Naive thymus-derived CD4-positive, alpha-beta T cell (primary cell): ENCODE measurements at regions of chr16 and their contacts with region 1.

Region 1: DNA sequence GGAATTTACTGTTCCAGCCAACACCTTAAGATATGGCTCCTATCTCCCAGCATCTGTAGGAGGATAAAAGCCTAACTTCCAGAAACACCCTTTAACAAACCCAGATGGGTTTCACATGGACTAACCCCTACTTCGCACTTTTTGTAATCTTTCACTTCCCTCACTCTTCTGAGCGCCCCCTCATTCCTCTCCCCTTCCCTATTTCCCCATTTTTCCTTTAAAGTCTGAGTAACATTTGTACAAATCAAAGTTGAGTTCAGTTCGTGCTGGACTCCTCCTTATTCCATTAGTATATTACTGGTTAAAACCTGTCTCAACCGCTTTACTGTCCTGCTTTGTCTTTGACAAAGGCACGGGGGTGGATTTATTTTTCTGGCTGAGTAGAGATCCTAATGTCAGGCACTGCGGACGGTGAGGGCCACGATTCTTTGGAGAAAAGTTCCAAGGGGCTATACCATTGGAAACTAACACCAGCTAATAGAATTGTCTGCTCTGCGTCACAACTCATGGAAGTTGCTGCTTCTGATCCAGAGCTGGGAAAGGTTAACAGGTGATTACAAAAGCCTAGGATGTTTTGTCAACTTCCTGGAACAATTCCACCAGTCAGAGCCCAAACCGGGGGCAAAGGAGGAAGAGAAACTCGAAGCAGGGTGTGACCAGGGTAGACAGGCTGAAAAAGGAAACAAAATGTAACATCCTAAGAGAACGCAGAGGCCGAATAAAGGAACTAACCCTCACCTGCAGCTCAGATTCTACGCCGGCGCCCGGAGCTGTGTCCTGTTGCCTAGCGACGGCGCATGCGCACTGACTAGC is 12.5 kb downstream of the TAT start:
- DNase-seq: peak in 1 of 9 donors; percentile 3
- ATAC-seq: no peak
- H3K4me3 ChIP-seq: peak overlapping the region; percentile 63
- H3K4me3 Mint-ChIP-seq: peak overlapping the region; percentile 83 to 98 (median 91)
- H3K27ac ChIP-seq: peak overlapping the region; percentile 75
- H3K27ac Mint-ChIP-seq: peak overlapping the region; percentile 92 to 98 (median 94)
- H3K4me1 ChIP-seq: peaks cover 13 to 15% of the 10 kb centered on the region in 2 donors
- H3K4me1 Mint-ChIP-seq: peaks cover 10 to 23% (median 16%) of the 10 kb centered on the region in 7 donors
- H3K27me3 ChIP-seq: no peaks in the 10 kb centered on the region
- H3K27me3 Mint-ChIP-seq: peaks cover 0 to 15% (median 0%) of the 10 kb centered on the region in 5 donors

Region 2: GRCh38 chr16:71288890-71289733 is 275.2 kb before region 1 on chr16 and contains the start of gene CMTR2:
- CTCF ChIA-PET with region 1: no interaction called
- POLR2A ChIA-PET with region 1: no interaction called
- intact Hi-C with region 1: loop called (anchors 1 to 2 kb)
- DNase-seq: peak; percentile 77 to 92 (median 87)
- ATAC-seq: peak; percentile 97
- H3K4me3 ChIP-seq: peak within 1 kb of the TSS; percentile 87
- H3K4me3 Mint-ChIP-seq: peak within 1 kb of the TSS; percentile 81 to 93 (median 89)
- H3K27ac ChIP-seq: peak within 1 kb of the TSS; percentile 82
- H3K27ac Mint-ChIP-seq: peak within 1 kb of the TSS; percentile 75 to 95 (median 92)
- H3K4me1 ChIP-seq: peaks cover 5 to 14% of the 10 kb centered on the region in 2 donors
- H3K4me1 Mint-ChIP-seq: peaks cover 21 to 36% (median 30%) of the 10 kb centered on the region in 7 donors
- H3K27me3 ChIP-seq: no peaks in the 10 kb centered on the region
- H3K27me3 Mint-ChIP-seq: peaks cover 13 to 26% (median 19%) of the 10 kb centered on the region in 5 donors
- total RNA-seq, gene CMTR2: 8.0 to 28.2 (median 22.3) TPM

Region 3: DNA sequence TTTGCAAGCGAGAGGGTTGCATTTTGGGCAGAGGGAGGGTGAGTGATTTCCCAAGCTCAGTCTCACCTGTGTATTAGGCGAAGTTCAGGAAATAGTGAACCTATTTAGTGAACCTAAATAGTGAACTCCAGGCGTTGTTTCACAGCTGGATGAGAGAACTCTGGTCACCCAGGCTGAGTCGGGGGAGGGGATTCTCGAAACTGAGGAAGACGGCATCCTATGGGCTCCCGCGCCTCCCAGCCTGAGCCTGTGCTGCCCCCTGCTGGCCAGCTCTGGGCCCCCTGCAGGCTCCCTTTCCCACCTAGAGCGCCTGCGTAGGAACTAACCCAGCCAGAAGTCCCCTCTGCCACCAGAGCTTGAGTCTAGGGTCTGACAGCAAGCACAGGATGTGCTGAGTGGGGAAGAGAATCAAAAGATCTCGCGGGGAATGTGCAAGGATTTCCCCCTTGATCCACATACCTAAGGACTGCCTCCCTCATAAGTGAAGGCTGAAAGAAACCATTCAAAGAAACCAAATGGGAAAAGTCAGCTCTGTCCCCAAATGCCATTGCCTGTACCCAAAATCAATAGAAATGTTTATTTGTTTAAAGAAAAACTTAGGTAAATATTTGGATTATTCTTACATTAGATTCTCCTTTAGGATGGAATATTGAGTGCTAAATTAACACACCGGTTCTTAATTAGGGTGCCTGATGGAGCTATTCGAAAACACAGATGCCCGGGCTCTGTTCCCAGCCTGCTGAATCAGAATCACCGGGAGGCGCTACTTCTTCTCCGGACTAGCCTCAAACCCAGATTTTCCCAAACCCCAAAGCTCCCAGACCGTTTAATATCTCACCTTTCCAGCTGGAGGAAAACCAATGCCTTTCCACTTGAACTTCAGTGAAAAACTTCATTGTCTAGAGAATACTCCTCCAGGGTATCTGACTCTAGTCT is 46.8 kb after region 1 on chr16:
- CTCF ChIA-PET with region 1: interaction called, 45 read pairs
- POLR2A ChIA-PET with region 1: interaction called, 27 read pairs
- intact Hi-C with region 1: loop called (anchors 1 kb)
- DNase-seq: peak; percentile 43 to 82 (median 72)
- ATAC-seq: peak; percentile 96
- H3K4me3 ChIP-seq: no peak overlapping the region
- H3K4me3 Mint-ChIP-seq: peak overlapping the region in 4 of 10 donors; percentile 21 to 56 (median 38)
- H3K27ac ChIP-seq: no peak overlapping the region
- H3K27ac Mint-ChIP-seq: no peak overlapping the region
- H3K4me1 ChIP-seq: no peaks in the 10 kb centered on the region
- H3K4me1 Mint-ChIP-seq: peaks cover 0 to 5% (median 0%) of the 10 kb centered on the region in 7 donors
- H3K27me3 ChIP-seq: no peaks in the 10 kb centered on the region
- H3K27me3 Mint-ChIP-seq: peaks cover 11 to 36% (median 22%) of the 10 kb centered on the region in 5 donors

Region 4: DNA sequence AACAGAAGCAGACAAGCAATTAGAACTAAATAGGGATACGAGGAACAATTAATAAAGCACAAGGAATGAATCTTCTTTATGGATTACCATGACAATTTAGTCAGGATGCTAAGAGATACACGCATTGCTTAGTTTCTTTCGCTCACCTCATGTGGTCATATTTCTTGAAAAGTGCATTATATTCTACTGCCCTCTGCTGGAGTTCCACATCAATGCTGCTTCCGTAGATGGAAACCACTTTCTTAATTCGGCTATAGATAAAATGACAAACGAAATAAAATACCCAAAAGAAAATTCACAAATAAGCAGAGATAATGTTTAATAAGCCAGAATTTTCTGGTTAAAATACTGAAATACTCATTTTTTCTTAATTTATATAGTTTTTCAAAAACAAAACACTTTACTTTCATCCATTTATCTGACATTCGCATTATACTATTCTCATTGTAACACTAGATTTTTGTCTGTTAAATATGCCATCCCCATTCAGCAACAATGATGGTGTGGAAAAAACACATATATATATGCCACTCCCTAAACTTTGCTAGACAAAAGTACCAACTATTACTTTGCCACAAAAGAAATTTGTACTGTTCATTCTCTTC is 182.2 kb after region 1 on chr16:
- CTCF ChIA-PET with region 1: no interaction called
- POLR2A ChIA-PET with region 1: no interaction called
- intact Hi-C with region 1: loop called (anchors 1 to 2 kb)
- DNase-seq: peak in 7 of 9 donors; percentile 14 to 59 (median 45)
- ATAC-seq: peak; percentile 82
- H3K4me3 ChIP-seq: no peak overlapping the region
- H3K4me3 Mint-ChIP-seq: no peak overlapping the region
- H3K27ac ChIP-seq: no peak overlapping the region
- H3K27ac Mint-ChIP-seq: peak overlapping the region in 1 of 9 donors; percentile 14
- H3K4me1 ChIP-seq: no peaks in the 10 kb centered on the region
- H3K4me1 Mint-ChIP-seq: peaks cover 0 to 5% (median 0%) of the 10 kb centered on the region in 7 donors
- H3K27me3 ChIP-seq: no peaks in the 10 kb centered on the region
- H3K27me3 Mint-ChIP-seq: no peaks in the 10 kb centered on the region

Region 5: DNA sequence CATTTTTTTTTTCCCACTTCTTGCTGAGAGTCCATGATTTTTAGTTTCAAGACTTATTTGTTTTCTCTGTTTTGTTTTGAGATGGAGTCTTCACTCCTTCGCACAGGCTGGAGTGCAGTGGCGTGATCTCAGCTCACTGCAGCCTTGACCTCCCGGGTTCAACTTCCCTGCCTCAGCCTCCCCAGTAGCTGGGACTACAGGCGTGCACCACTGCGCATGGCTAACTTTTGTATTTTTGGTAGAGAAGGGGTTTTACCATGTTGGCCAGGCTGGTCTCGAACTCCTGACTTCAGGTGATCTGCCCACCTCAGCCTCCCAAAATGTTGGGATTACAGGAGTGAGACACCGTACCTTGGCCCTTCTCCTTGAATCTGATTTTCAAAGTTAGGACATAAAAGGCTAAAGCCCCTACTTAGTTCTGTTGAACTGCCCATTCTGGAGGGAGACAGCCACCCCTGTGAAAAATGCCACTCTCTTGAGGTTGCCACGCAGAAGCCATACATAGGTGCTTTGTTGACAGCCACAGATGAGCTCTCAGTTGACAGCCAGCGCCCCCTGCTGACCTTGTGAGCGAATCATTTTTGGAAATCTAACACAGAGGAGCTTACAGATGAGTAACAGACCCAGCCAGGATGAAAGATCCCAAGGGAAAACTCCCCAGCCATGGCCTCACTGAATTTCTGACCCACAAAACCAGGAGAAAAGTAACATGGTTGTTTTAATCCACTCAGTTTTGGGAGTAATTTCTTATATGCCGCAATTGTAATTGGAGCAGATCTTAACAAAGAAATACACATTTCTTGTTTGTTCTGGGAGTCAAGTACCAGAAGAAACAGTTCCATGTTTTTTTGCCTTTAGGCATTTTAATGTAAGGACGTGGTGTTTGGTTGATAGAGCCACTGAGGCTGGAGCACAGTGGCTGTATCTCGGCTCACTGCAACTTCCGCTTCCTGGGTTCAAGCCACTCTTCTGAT is 397.0 kb after region 1 on chr16:
- CTCF ChIA-PET with region 1: interaction called, 7 read pairs
- POLR2A ChIA-PET with region 1: interaction called, 3 read pairs
- intact Hi-C with region 1: loop called (anchors 1 kb)
- DNase-seq: peak; percentile 52 to 81 (median 74)
- ATAC-seq: peak; percentile 98
- H3K4me3 ChIP-seq: no peak overlapping the region
- H3K4me3 Mint-ChIP-seq: no peak overlapping the region
- H3K27ac ChIP-seq: no peak overlapping the region
- H3K27ac Mint-ChIP-seq: no peak overlapping the region
- H3K4me1 ChIP-seq: no peaks in the 10 kb centered on the region
- H3K4me1 Mint-ChIP-seq: peaks cover 3 to 24% (median 17%) of the 10 kb centered on the region in 7 donors
- H3K27me3 ChIP-seq: no peaks in the 10 kb centered on the region
- H3K27me3 Mint-ChIP-seq: peaks cover 0 to 8% (median 0%) of the 10 kb centered on the region in 5 donors

Region 6: GRCh38 chr16:72664509-72665225 is 1100.3 kb after region 1 on chr16:
- CTCF ChIA-PET with region 1: no interaction called
- POLR2A ChIA-PET with region 1: no interaction called
- intact Hi-C with region 1: loop called in 1 of 2 experiments (anchors 10 kb)
- DNase-seq: peak; percentile 79 to 95 (median 94)
- ATAC-seq: peak; percentile 100
- H3K4me3 ChIP-seq: peak overlapping the region; percentile 73
- H3K4me3 Mint-ChIP-seq: peak overlapping the region; percentile 93 to 100 (median 100)
- H3K27ac ChIP-seq: peak overlapping the region; percentile 72
- H3K27ac Mint-ChIP-seq: peak overlapping the region; percentile 86 to 98 (median 97)
- H3K4me1 ChIP-seq: peaks cover 11 to 13% of the 10 kb centered on the region in 2 donors
- H3K4me1 Mint-ChIP-seq: peaks cover 4 to 24% (median 18%) of the 10 kb centered on the region in 7 donors
- H3K27me3 ChIP-seq: no peaks in the 10 kb centered on the region
- H3K27me3 Mint-ChIP-seq: peaks cover 0 to 16% (median 10%) of the 10 kb centered on the region in 5 donors